Activated CD4-positive, alpha-beta T cell treated with anti-CD3 and anti-CD28 coated beads, Interleukin-2, amount 10 ng/mL, durations not matched to agents 24 days and 14 days (primary cell): ENCODE measurements at regions of chrX and their contacts with region 1.

Region 1: GRCh38 chrX:71365876-71366673 is at the start of gene TAF1:
- DNase-seq: peak; percentile 96
- H3K4me3 Mint-ChIP-seq: peak within 1 kb of the TSS; percentile 98
- H3K27ac Mint-ChIP-seq: peak within 1 kb of the TSS; percentile 100
- H3K4me1 Mint-ChIP-seq: peaks cover 21% of the 10 kb centered on the region
- H3K27me3 Mint-ChIP-seq: no peaks in the 10 kb centered on the region
- total RNA-seq, gene TAF1: 46.7 and 47.8 TPM in 2 replicates

Region 2: GRCh38 chrX:71111141-71111843 is 254.8 kb before region 1 on chrX and contains the start of gene IL2RG:
- intact Hi-C with region 1: loop called (anchors 5 kb)
- DNase-seq: peak; percentile 93
- H3K4me3 Mint-ChIP-seq: peak within 1 kb of the TSS; percentile 100
- H3K27ac Mint-ChIP-seq: peak within 1 kb of the TSS; percentile 95
- H3K4me1 Mint-ChIP-seq: peaks cover 31% of the 10 kb centered on the region
- H3K27me3 Mint-ChIP-seq: no peaks in the 10 kb centered on the region
- total RNA-seq, gene IL2RG: 337 and 348 TPM in 2 replicates

Region 3: GRCh38 chrX:71450433-71451106 is 84.5 kb after region 1 on chrX:
- intact Hi-C with region 1: no loop called
- DNase-seq: no peak
- H3K4me3 Mint-ChIP-seq: no peak overlapping the region
- H3K27ac Mint-ChIP-seq: no peak overlapping the region
- H3K4me1 Mint-ChIP-seq: no peaks in the 10 kb centered on the region
- H3K27me3 Mint-ChIP-seq: no peaks in the 10 kb centered on the region